Caco-2 (cell line): ENCODE measurements at regions of chr5 and their contacts with region 1.

Region 1: DNA sequence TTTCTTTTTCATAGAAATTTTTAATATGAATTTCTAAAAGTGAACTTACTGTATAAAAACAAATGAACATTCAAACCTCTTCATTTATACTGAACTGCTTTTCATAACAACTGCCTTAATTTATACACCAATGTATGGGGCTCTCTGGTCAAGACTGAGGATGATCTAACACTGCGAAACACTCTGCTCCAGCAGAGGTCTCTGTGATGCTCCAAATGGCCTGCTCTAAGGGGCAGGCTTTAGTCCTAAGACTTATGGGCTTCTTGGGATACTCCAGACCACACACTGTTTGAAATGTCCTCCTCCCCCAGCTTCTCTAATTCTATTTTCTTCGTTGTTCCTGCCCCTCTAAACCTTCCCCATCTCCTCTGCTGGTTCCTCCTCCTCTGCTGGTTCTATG is 58.5 kb downstream of the LIFR start:
- DNase-seq: peak in 1 of 2 experiments; percentile 35
- H3K4me3 ChIP-seq: no peak overlapping the region
- H3K4me3 Mint-ChIP-seq: no peak overlapping the region
- H3K27ac Mint-ChIP-seq: no peak overlapping the region
- H3K4me1 ChIP-seq: peaks cover 7% of the 10 kb centered on the region; the same call in 1 of the 2 replicates
- H3K4me1 Mint-ChIP-seq: peaks cover 6% of the 10 kb centered on the region
- H3K27me3 ChIP-seq: no peaks in the 10 kb centered on the region
- H3K27me3 Mint-ChIP-seq: no peaks in the 10 kb centered on the region
- CTCF ChIP-seq: peak; percentile 11 to 52

Region 2: GRCh38 chr5:38528162-38528703 is 30.3 kb after region 1 on chr5:
- CTCF ChIA-PET with region 1: no interaction called
- POLR2A ChIA-PET with region 1: no interaction called
- intact Hi-C with region 1: loop called (anchors 1 kb)
- DNase-seq: peak; percentile 16 to 42
- H3K4me3 ChIP-seq: no peak overlapping the region
- H3K4me3 Mint-ChIP-seq: no peak overlapping the region
- H3K27ac Mint-ChIP-seq: no peak overlapping the region
- H3K4me1 ChIP-seq: peaks cover 20% of the 10 kb centered on the region
- H3K4me1 Mint-ChIP-seq: peaks cover 26% of the 10 kb centered on the region
- H3K27me3 ChIP-seq: no peaks in the 10 kb centered on the region
- H3K27me3 Mint-ChIP-seq: no peaks in the 10 kb centered on the region
- CTCF ChIP-seq: peak in 1 of 2 experiments; percentile 20

Region 3: DNA sequence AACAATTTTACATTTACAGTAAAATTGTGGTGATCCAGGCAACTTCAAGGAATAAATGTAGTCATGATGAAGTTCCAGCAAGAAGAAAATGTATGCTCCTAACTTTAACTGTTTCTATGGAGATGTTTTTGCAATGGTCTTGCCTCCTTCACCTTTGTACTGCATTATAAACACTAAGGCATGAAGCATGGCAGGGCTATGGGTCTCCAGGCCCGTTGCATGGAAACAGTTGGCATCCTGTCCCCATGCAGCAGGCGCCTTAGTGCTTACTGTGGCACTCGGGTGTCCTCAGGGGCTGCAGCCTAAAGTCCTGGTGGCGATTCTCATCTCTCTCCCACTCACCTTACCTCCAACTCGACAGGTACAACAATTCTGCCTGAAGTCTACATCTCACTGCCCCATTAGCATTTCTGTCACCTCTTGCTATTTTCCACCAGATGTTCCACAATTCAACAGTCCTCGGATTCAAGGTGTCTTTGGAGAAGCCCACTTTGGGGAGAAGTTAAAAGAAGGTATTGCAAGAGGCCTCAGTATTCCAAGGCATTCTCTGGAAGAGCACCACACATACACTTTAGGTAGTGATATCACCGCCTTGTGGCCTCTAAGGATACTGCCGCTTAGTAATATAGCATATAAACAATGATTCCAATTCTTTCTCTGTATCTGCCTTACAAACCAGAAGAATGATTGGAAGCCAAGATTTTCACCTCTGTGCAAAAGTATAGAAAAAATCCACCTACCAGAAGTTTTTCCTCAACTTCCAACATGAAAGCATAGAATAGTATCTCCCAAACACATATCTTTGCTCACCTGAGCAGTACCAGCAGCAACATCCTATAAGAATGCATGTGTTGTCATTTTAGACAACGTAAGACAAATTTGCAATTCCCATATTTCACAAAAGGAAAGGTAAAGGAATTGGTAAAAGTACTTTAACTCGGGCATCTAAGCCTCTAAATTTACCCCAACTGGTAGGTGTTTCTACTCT is 53.4 kb after region 1 on chr5:
- CTCF ChIA-PET with region 1: no interaction called
- POLR2A ChIA-PET with region 1: no interaction called
- intact Hi-C with region 1: loop called (anchors 2 kb)
- DNase-seq: peak in 1 of 2 experiments; percentile 23
- H3K4me3 ChIP-seq: no peak overlapping the region
- H3K4me3 Mint-ChIP-seq: no peak overlapping the region
- H3K27ac Mint-ChIP-seq: peak overlapping the region; percentile 25
- H3K4me1 ChIP-seq: peaks cover 40% of the 10 kb centered on the region
- H3K4me1 Mint-ChIP-seq: peaks cover 12% of the 10 kb centered on the region
- H3K27me3 ChIP-seq: no peaks in the 10 kb centered on the region
- H3K27me3 Mint-ChIP-seq: no peaks in the 10 kb centered on the region
- CTCF ChIP-seq: peak; percentile 32 to 53

Region 4: GRCh38 chr5:38666668-38667498 is 168.9 kb after region 1 on chr5:
- CTCF ChIA-PET with region 1: no interaction called
- POLR2A ChIA-PET with region 1: no interaction called
- intact Hi-C with region 1: loop called (anchors 1 kb)
- DNase-seq: peak; percentile 52 to 56
- H3K4me3 ChIP-seq: no peak overlapping the region
- H3K4me3 Mint-ChIP-seq: no peak overlapping the region
- H3K27ac Mint-ChIP-seq: peak overlapping the region; percentile 13
- H3K4me1 ChIP-seq: peaks cover 58% of the 10 kb centered on the region
- H3K4me1 Mint-ChIP-seq: peaks cover 45% of the 10 kb centered on the region
- H3K27me3 ChIP-seq: no peaks in the 10 kb centered on the region
- H3K27me3 Mint-ChIP-seq: no peaks in the 10 kb centered on the region
- CTCF ChIP-seq: peak; percentile 60 to 73

Region 5: DNA sequence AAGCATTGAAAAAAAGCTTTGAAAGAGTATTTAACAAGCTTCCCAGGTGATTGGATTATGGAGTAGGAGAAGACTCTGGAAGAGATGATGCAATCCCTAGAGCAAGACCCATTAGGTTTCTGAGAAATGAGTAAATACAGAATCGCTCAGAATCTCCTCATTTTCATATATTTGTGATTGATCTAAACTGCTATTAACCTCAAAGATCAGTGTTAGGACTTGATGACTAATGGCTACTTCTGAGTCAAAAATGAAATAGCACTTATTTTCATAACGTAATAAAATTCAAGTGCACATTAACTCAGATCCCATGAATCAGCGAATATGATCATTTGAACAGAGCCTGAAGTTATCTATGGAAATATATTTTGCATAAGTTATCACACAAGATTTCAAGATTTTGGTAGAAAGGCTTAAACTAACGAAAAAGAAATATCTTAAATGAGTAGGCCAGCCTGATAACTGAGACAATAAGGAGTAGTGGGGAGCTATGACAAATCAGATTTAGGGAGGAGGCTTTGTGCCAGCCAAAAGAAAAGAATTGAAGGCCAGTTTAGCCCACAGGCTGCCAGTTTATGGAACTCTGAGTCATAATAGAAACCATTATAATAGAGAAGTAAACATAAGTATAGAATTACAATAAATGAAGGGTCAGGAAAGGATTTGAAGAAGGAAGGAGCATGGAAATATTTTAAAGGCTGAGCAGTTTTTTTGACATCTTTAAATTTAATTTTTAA is 241.2 kb after region 1 on chr5:
- CTCF ChIA-PET with region 1: interaction called, 3 read pairs
- POLR2A ChIA-PET with region 1: no interaction called
- intact Hi-C with region 1: loop called (anchors 10 kb)
- DNase-seq: no peak
- H3K4me3 ChIP-seq: no peak overlapping the region
- H3K4me3 Mint-ChIP-seq: no peak overlapping the region
- H3K27ac Mint-ChIP-seq: no peak overlapping the region
- H3K4me1 ChIP-seq: no peaks in the 10 kb centered on the region
- H3K4me1 Mint-ChIP-seq: no peaks in the 10 kb centered on the region
- H3K27me3 ChIP-seq: no peaks in the 10 kb centered on the region
- H3K27me3 Mint-ChIP-seq: no peaks in the 10 kb centered on the region
- CTCF ChIP-seq: no peak